K562 (cell line): ENCODE measurements at regions of chr2 and their contacts with region 1.

Region 1: DNA sequence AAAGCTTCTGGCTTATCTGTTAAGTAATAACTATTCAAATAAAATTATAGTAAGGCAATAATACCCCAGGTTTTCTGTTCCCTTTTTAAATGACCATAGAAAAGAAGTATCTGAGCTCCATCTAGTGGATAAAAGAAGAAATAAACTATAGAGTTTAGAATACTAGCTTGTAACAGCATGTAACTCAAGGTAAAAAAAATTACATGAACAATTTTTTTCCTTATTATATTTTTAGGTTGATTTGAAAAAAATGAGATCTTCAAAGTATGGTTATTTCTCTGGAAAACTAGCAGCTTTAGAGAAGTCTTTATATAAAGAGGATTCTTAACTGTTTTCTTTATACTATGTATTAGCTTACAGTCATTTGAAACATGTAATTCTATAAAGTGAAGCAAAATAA is 58.1 kb downstream of the NCKAP1 start:
- DNase-seq: peak; percentile 24 to 47 (median 27)
- ATAC-seq: peak; percentile 80
- H3K4me3 ChIP-seq: no peak overlapping the region
- H3K27ac ChIP-seq: no peak overlapping the region
- H3K4me1 ChIP-seq: no peaks in the 10 kb centered on the region
- H3K27me3 ChIP-seq: no peaks in the 10 kb centered on the region
- CTCF ChIP-seq: peak in 1 of 3 experiments; percentile 70; a peak in 4 of 6 replicates
- EP300 ChIP-seq: no peak
- POLR2A ChIP-seq: no peak
- RAD21 ChIP-seq: peak; percentile 66 to 73

Region 2: GRCh38 chr2:182186132-182186735 is 793.9 kb before region 1 on chr2:
- CTCF ChIA-PET with region 1: interaction called, 4 read pairs
- POLR2A ChIA-PET with region 1: no interaction called
- in situ Hi-C with region 1: no loop called
- intact Hi-C with region 1: loop called (anchors 2 kb)
- DNase-seq: peak; percentile 13 to 51 (median 16)
- ATAC-seq: peak; percentile 83
- H3K4me3 ChIP-seq: no peak overlapping the region
- H3K27ac ChIP-seq: no peak overlapping the region
- H3K4me1 ChIP-seq: no peaks in the 10 kb centered on the region
- H3K27me3 ChIP-seq: no peaks in the 10 kb centered on the region
- CTCF ChIP-seq: peak; percentile 57 to 88 (median 63); a peak in 5 of 6 replicates
- EP300 ChIP-seq: no peak
- POLR2A ChIP-seq: no peak
- RAD21 ChIP-seq: peak; percentile 89 to 90

Region 3: GRCh38 chr2:182259629-182260150 is 720.4 kb before region 1 on chr2:
- CTCF ChIA-PET with region 1: no interaction called
- POLR2A ChIA-PET with region 1: no interaction called
- in situ Hi-C with region 1: no loop called
- intact Hi-C with region 1: no loop called
- DNase-seq: no peak
- ATAC-seq: no peak
- H3K4me3 ChIP-seq: no peak overlapping the region
- H3K27ac ChIP-seq: no peak overlapping the region
- H3K4me1 ChIP-seq: no peaks in the 10 kb centered on the region
- H3K27me3 ChIP-seq: no peaks in the 10 kb centered on the region
- CTCF ChIP-seq: no peak
- EP300 ChIP-seq: no peak
- POLR2A ChIP-seq: no peak
- RAD21 ChIP-seq: no peak

Region 4: DNA sequence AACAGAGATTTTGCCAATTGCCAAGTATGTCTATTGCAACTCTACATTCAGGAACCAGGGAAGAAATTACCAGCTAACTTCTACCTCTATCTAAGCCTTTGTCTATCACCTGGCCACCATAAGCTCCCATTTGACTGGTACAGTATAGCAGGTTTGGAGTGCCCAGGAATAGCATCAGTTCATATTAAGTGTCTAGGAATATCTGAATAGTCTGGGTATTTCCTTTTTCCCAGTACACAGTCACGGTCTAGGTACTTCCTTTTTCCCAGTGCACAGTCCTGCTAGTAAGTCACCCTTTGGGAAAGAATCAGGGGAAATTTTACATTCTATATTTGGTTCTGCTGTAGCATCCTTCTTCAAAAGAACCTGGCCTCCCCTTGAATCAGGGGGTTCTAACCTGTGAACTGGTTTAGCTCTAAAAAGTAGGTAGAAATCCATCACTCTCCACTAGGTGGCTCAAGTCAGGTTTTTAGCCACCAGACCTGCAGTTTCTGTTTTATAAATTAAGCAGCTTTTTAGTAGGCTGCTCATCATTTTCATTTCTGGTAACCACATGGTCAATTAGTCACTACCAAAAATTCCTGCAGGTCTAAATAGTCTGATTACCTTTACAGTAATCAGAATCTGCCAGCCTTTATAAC is 313.3 kb before region 1 on chr2:
- CTCF ChIA-PET with region 1: interaction called, 5 read pairs
- POLR2A ChIA-PET with region 1: no interaction called
- in situ Hi-C with region 1: no loop called
- intact Hi-C with region 1: loop called (anchors 1 kb)
- DNase-seq: peak; percentile 27 to 49 (median 36)
- ATAC-seq: peak; percentile 83
- H3K4me3 ChIP-seq: no peak overlapping the region
- H3K27ac ChIP-seq: no peak overlapping the region
- H3K4me1 ChIP-seq: no peaks in the 10 kb centered on the region
- H3K27me3 ChIP-seq: peaks cover 2 to 13% of the 10 kb centered on the region in 2 experiments; a peak in 3 of 5 replicates
- CTCF ChIP-seq: peak; percentile 37 to 59 (median 57); a peak in 5 of 6 replicates
- EP300 ChIP-seq: no peak
- POLR2A ChIP-seq: no peak
- RAD21 ChIP-seq: peak in 1 of 2 experiments; percentile 65; a peak in 3 of 4 replicates

Region 5: DNA sequence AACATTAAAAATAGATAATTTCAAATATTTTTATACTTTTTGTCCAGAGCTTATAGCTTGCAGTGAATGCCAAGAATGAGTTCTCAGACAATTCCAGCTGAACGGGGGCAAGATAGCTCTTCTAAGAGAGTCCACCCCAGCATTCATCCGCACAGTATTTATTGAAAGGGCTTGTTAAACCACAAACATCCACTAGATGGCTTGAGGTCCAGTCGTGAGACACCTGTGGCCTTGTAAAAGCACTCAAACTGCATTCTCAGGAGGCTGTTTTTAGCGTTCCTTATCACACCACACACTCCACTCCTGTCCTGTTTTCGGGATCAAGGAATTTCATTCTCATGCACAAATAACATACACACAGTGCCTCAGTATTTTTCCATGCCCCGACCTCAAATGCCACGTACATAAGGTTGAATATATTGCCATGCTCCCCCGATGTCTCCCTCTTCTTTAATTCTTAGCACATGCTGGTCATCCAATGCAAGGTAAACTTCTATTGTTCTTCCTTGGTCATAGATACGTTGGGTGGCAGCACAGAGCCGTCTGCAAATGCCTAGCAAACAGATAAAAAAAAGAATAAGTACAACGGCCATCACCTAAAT is 216.7 kb before region 1 on chr2:
- CTCF ChIA-PET with region 1: interaction called, 10 read pairs
- POLR2A ChIA-PET with region 1: interaction called, 3 read pairs
- in situ Hi-C with region 1: loop called (anchors 10 kb)
- intact Hi-C with region 1: loop called (anchors 5 kb)
- DNase-seq: peak; percentile 23 to 68 (median 30)
- ATAC-seq: peak; percentile 87
- H3K4me3 ChIP-seq: no peak overlapping the region
- H3K27ac ChIP-seq: no peak overlapping the region
- H3K4me1 ChIP-seq: no peaks in the 10 kb centered on the region
- H3K27me3 ChIP-seq: no peaks in the 10 kb centered on the region
- CTCF ChIP-seq: peak; percentile 64 to 72 (median 70)
- EP300 ChIP-seq: no peak
- POLR2A ChIP-seq: no peak
- RAD21 ChIP-seq: peak; percentile 42 to 67

Region 6: DNA sequence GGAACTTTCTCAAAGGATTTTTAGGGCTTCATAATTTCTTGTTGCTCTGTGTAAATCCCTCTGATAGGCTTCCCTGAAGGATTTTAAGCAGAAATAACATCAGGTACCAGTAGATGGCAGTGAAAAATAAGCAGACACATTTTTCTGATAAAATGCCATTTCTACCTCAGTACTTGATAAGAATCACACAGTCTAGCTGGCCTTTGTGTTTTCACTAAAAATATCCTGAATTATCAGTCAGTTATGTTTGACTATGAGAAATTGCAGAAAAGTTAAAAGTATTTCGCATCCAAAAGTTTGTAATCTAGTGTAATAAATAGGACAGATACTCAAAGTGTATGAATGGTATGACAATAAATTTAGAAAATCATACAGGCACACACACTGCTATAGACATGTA is 195.3 kb before region 1 on chr2:
- CTCF ChIA-PET with region 1: interaction called, 4 read pairs
- POLR2A ChIA-PET with region 1: no interaction called
- in situ Hi-C with region 1: no loop called
- intact Hi-C with region 1: loop called (anchors 1 kb)
- DNase-seq: peak; percentile 18 to 34 (median 20)
- ATAC-seq: peak; percentile 79
- H3K4me3 ChIP-seq: no peak overlapping the region
- H3K27ac ChIP-seq: no peak overlapping the region
- H3K4me1 ChIP-seq: no peaks in the 10 kb centered on the region; a peak in 2 of 5 replicates
- H3K27me3 ChIP-seq: no peaks in the 10 kb centered on the region
- CTCF ChIP-seq: peak; percentile 36 to 72 (median 47); a peak in 4 of 6 replicates
- EP300 ChIP-seq: no peak
- POLR2A ChIP-seq: no peak
- RAD21 ChIP-seq: peak; percentile 52 to 78

Region 7: DNA sequence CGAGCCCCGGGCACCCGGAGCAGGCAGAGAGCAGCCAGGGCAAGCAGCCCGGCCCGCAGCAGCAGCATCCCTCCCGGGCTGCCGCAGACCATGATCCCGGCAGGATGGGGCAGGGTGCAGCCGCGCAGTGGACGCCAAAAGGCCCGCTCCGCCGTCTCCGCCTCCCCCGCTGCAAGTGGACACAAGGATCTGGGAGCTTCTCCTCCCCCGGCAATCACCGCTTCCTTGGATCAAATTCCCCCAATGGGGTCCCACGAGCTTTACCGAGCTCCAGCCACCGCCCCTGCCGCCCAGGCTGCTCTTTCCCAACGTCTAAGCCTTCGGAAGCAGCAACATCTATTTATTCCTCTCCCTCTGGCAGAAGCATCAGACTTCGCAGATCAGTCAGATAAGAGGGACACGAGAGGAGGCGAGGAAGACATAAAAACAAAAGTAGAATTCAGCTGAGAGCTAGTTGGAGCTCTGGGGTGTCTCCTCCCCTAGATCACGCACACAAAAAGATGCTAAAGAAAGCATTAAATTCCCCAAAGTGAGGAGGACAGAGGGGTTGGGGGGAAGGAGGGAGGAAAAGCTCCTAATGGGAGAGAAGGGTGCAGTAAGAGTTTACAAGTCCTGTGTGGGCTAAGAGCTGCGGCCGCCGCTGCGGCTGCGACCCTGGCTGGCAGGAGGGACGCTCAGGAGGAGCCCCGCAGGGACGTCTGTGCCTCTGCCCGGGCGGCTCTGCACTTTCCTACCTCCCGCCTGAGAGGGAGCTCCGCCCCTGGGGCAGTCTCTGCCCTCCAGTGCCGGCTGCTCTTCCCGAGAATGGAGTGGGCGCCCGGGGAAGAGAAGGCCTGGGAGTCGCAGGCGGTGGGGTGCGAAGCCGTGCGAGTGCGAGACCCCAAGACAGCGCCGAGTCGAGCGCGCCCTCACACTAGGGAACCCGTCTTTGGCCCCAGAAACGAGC is 113.4 kb before region 1 on chr2 and contains the start of gene FRZB:
- CTCF ChIA-PET with region 1: no interaction called
- POLR2A ChIA-PET with region 1: no interaction called
- in situ Hi-C with region 1: no loop called
- intact Hi-C with region 1: loop called (anchors 5 kb)
- DNase-seq: peak in 2 of 4 experiments; percentile 14 to 18
- ATAC-seq: peak; percentile 55
- H3K4me3 ChIP-seq: no peak within 1 kb of the TSS
- H3K27ac ChIP-seq: no peak within 1 kb of the TSS
- H3K4me1 ChIP-seq: peaks cover 0 to 15% of the 10 kb centered on the region in 2 experiments; a peak in 1 of 5 replicates
- H3K27me3 ChIP-seq: peaks cover 40 to 41% of the 10 kb centered on the region in 2 experiments
- CTCF ChIP-seq: no peak
- EP300 ChIP-seq: no peak
- POLR2A ChIP-seq: no peak
- RAD21 ChIP-seq: no peak
- polyA plus RNA-seq, gene FRZB: not detected

Region 8: GRCh38 chr2:183038341-183039300 is 58.5 kb after region 1 on chr2 and contains the start of gene NCKAP1:
- CTCF ChIA-PET with region 1: no interaction called
- POLR2A ChIA-PET with region 1: no interaction called
- in situ Hi-C with region 1: no loop called
- intact Hi-C with region 1: loop called (anchors 2 kb)
- DNase-seq: peak; percentile 91 to 95 (median 92)
- ATAC-seq: peak; percentile 77
- H3K4me3 ChIP-seq: peak within 1 kb of the TSS; percentile 76
- H3K27ac ChIP-seq: peak within 1 kb of the TSS; percentile 74
- H3K4me1 ChIP-seq: peaks cover 8 to 13% of the 10 kb centered on the region in 2 experiments; a peak in 3 of 5 replicates
- H3K27me3 ChIP-seq: no peaks in the 10 kb centered on the region
- CTCF ChIP-seq: peak; percentile 77 to 93 (median 80)
- EP300 ChIP-seq: no peak; the same call in 1 of the 2 replicates
- POLR2A ChIP-seq: peak; percentile 84
- RAD21 ChIP-seq: peak; percentile 57 to 65
- polyA plus RNA-seq, gene NCKAP1: 34.0 to 35.1 TPM